Psoas muscle (tissue), 8 donors: ENCODE measurements at regions of chr2 and their contacts with region 1.

Region 1: DNA sequence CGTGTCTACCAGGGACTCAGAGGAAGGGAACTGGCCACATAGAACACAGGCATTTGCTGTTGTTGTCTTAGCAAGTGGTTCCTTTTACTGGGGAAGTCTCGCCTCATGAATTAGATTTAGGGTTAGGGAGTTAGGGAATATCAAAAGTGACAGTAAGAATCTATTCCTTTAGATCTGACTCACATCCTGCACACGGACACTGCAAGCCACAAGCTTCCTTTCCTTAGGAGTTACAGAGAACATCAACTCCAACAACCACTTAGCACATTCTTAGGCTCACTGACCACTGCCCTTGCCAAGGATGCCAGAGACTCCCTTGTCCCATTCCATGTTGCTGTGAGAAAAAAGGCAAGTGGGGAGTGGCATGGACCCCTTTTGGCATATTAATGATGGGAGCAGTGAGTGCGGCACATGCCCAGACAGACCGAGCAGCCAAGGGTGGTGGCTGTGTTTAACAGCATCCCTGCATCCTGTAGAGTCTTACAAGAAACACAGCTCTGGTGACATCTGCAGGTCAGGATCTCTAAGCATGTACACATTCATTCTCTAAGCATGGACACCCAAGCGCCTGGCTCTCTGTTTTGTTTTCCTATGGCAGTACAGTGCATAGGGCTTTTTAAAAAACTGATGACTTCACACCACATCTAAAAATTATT is 745.6 kb upstream of the RAB6C start:
- DNase-seq: no peak
- ATAC-seq: peak; percentile 30 to 51 (median 43)
- H3K4me3 ChIP-seq: no peak overlapping the region
- H3K27ac ChIP-seq: no peak overlapping the region
- H3K4me1 ChIP-seq: no peaks in the 10 kb centered on the region
- H3K27me3 ChIP-seq: no peaks in the 10 kb centered on the region
- CTCF ChIP-seq: no peak

Region 2: GRCh38 chr2:128736689-128737545 is 497.0 kb before region 1 on chr2:
- intact Hi-C with region 1: loop called in 1 of 2 experiments (anchors 5 kb)
- DNase-seq: peak; percentile 80 to 90
- ATAC-seq: peak; percentile 80 to 91 (median 84)
- H3K4me3 ChIP-seq: peak overlapping the region; percentile 62
- H3K27ac ChIP-seq: no peak overlapping the region
- H3K4me1 ChIP-seq: peaks cover 7% of the 10 kb centered on the region
- H3K27me3 ChIP-seq: no peaks in the 10 kb centered on the region
- CTCF ChIP-seq: peak; percentile 99

Region 3: DNA sequence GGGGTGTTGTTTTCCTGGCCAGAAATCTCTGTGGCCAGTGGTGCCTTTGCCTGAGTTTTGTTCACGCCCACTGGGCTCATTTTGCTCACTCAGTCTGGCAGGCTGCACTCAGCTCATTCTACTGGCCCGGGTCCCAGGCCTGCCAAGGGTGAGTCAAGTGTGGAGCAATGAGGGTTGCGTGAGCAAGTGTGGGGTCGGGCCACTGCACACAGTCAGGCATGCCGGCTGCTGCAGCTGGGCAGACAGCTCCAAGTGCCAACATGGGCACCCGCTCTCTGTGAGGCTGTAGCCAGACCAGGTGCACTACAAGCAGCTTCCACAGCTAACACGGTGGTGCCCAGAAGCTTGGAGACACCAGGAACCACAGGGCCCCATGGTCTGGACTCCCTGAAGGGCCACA is 55.5 kb before region 1 on chr2:
- intact Hi-C with region 1: loop called in 1 of 2 experiments (anchors 2 kb)
- DNase-seq: peak; percentile 71 to 84
- ATAC-seq: peak; percentile 99 to 100 (median 100)
- H3K4me3 ChIP-seq: no peak overlapping the region
- H3K27ac ChIP-seq: no peak overlapping the region
- H3K4me1 ChIP-seq: no peaks in the 10 kb centered on the region
- H3K27me3 ChIP-seq: no peaks in the 10 kb centered on the region
- CTCF ChIP-seq: no peak

Region 4: GRCh38 chr2:129480790-129481189 is 246.9 kb after region 1 on chr2:
- intact Hi-C with region 1: no loop called
- DNase-seq: no peak
- ATAC-seq: no peak
- H3K4me3 ChIP-seq: no peak overlapping the region
- H3K27ac ChIP-seq: no peak overlapping the region
- H3K4me1 ChIP-seq: no peaks in the 10 kb centered on the region
- H3K27me3 ChIP-seq: no peaks in the 10 kb centered on the region
- CTCF ChIP-seq: no peak

Region 5: DNA sequence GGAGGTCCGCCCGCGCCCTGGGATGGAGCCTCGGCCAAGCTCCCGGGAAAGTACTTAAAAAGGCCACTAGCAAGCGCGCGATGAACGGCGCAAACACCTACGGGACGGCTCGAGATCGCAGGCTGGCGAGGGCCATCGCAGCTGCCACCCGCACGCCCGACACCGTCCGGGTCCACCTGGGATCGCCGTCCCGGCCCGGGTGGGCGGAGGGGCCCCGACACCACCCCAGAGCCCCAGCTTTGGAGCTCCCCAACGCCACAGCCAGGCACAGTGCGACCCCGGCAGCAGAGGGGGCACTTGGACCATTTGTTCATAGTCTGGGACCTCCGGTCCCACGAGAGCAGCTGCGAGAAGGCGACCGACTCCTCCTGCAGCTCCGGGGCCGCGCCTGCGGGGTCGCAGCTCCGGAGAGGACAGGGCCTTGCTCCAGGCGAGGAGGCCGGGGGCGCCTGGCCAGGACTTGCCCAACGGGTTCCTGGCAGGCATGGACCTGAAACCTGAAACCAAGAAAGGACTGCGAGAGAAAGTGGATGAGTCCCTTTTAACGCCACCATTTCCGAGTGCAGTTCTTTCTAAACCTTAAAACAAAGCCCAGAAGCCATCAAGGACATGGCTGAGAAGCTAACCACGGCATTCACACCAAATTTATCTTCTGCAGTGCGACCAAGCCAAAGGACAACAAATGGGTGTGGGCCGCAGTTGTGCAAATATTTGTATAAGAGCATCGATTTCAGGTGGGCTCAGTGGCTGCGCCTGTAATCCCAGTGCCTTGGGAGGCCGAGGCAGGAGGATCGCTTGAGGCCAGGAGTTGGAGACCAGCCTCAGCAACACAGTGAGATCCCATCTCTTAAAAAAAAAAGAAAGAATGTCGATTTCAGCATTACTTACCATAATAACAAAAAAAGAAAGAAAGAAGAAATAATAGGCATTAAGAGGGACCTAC is 1054.9 kb after region 1 on chr2:
- intact Hi-C with region 1: loop called in 1 of 2 experiments (anchors 5 kb)
- DNase-seq: peak in 1 of 2 donors; percentile 6
- ATAC-seq: no peak
- H3K4me3 ChIP-seq: peak overlapping the region; percentile 4
- H3K27ac ChIP-seq: no peak overlapping the region
- H3K4me1 ChIP-seq: no peaks in the 10 kb centered on the region
- H3K27me3 ChIP-seq: peaks cover 0 to 3% (median 1%) of the 10 kb centered on the region in 3 donors
- CTCF ChIP-seq: no peak